Vagina (tissue), 2 donors: ENCODE measurements at regions of chr11 and their contacts with region 1.

Region 1: GRCh38 chr11:46889689-46890475 is 28.5 kb downstream of the LRP4 start:
- DNase-seq: no peak
- H3K4me3 ChIP-seq: no peak overlapping the region
- H3K27ac ChIP-seq: no peak overlapping the region
- H3K4me1 ChIP-seq: no peaks in the 10 kb centered on the region
- H3K27me3 ChIP-seq: no peaks in the 10 kb centered on the region
- CTCF ChIP-seq: peak; percentile 72 to 94 (median 88)
- POLR2A ChIP-seq: no peak

Region 2: GRCh38 chr11:46537537-46538295 is 352.2 kb before region 1 on chr11:
- intact Hi-C with region 1: no loop called
- DNase-seq: no peak
- H3K4me3 ChIP-seq: no peak overlapping the region
- H3K27ac ChIP-seq: no peak overlapping the region
- H3K4me1 ChIP-seq: peaks cover 21% of the 10 kb centered on the region
- H3K27me3 ChIP-seq: no peaks in the 10 kb centered on the region
- CTCF ChIP-seq: peak; percentile 42 to 74 (median 64)
- POLR2A ChIP-seq: no peak

Region 3: DNA sequence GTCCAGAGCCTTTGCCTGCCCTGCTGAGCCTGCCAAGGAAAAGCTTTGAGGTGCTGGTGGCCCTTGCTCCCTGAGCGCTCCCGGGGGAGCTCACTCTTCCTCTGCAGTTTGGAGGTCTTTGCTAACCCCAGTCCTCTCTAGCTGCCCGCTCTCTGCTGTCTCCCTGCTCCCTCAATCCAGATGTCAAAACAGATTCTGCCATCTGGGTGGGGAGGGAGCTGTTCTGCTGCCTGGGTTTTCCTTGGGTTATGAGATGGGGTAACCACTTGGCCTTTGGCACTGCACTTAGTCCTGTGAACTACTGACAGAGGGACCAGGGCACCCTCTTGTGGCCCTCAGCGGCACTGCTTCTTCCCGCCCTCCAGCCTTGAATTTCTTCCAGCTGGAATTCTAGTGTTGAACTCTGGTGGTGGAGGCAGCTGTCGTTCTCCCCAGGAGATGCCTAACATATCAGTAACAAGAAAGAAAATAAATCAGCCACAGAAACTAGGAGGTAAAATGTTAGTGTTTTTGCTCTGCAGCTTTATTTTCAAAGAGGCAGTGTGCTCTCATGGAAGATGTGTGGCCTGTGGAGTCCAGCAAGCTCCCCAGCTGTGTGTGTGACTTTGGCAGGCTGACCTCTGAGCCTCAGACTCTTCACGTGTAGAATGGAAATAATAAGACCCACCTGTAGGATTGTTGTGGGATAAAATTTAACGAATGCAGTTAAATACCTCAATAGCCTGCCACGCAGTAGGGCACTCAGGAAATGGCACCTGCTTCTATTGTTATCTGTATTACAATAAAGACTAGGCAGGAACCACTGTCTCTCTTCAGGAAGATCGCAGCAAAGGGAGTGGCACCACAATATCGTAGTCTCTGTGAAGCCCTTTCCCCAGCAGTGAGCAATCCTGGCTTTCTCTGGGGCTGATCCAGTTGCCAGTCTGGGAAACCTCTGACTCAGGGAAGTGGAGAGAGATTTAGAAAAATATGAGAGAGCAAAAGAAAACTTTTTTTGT is 263.4 kb after region 1 on chr11:
- intact Hi-C with region 1: loop called (anchors 2 kb)
- DNase-seq: no peak
- H3K4me3 ChIP-seq: no peak overlapping the region
- H3K27ac ChIP-seq: peak overlapping the region; percentile 3
- H3K4me1 ChIP-seq: peaks cover 41% of the 10 kb centered on the region
- H3K27me3 ChIP-seq: no peaks in the 10 kb centered on the region
- CTCF ChIP-seq: peak; percentile 78 to 93 (median 88)
- POLR2A ChIP-seq: no peak